ENCODE measurements at regions of chr3 and their contacts with region 1.

Region 1: DNA sequence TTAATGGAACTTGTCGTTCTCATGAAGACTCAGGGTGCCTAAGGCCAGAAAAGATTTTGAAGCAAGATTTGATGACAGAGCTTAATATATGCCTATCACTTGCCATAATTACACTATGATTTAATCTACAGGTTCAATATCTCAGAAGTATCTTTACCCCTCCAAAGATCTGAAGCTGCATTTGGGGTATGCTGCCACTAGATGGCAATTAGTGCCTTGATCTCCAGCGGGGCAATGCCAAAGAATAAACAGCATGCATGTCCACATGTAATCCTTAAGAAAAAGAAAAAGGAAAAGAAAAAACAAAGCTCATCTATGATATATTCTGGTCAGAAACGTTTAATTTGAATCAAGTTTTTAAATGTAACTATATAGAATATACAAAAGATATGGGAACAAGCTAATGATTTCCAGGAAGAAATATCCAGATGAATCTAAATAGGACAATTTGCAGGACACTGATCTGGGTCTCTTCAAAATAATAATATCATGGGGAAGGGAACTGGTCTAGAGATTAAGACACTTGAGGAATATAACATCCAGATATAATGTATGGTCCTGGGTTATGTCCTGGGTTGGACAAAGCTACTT is 55.0 kb upstream of the SOX14 start:
- DNase-seq: peak; percentile 3
- ATAC-seq: no peak
- H3K4me3 ChIP-seq: no peak overlapping the region
- H3K27ac ChIP-seq: no peak overlapping the region
- H3K4me1 ChIP-seq: no peaks in the 10 kb centered on the region
- H3K27me3 ChIP-seq: no peaks in the 10 kb centered on the region
- CTCF ChIP-seq: peak; percentile 37; the same call in 1 of the 2 replicates
- EP300 ChIP-seq: no peak
- POLR2A ChIP-seq: no peak
- RAD21 ChIP-seq: no peak

Region 2: DNA sequence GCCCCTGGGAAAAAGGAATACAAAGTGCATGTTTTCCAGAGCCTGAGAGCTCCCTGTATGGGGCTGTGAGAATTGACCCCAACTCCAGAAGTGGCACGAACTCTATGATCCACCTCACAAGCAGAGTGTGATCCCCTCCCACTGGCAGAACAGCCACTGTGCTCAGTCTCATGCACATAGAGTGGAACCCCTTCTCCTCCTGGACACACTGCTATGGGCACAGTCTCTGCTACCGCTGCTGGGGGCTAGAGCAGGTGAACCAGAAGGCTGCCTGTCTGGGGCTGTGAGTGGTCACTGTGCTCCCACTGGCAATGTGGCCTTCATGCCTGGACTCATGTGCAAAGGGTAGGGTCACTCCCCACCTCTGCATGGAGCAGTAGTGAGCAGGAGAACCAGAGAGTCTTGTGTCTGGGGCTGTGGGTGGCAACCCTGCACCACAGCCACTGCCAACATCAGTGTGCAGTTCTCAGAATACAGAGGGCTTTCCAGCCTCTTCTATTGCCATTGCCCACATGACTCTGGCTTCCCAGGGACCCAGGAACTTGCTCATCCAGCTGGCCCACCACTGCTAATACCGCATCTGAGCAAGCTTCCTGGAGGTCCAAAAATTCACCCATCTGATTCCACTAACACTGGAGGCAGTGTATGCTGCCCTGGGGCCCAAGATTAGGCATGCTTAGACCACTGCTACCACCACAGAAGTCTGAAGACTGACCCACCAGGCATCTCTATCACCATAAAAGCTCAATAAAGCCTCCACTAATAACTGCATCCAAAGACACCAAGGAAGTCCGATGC is 288.7 kb before region 1 on chr3:
- CTCF ChIA-PET with region 1: no interaction called
- POLR2A ChIA-PET with region 1: no interaction called
- in situ Hi-C with region 1: no loop called
- intact Hi-C with region 1: no loop called
- DNase-seq: no peak
- ATAC-seq: no peak
- H3K4me3 ChIP-seq: no peak overlapping the region
- H3K27ac ChIP-seq: no peak overlapping the region
- H3K4me1 ChIP-seq: no peaks in the 10 kb centered on the region
- H3K27me3 ChIP-seq: no peaks in the 10 kb centered on the region
- CTCF ChIP-seq: no peak
- EP300 ChIP-seq: no peak
- POLR2A ChIP-seq: no peak
- RAD21 ChIP-seq: no peak

Region 3: GRCh38 chr3:137572931-137573330 is 136.2 kb before region 1 on chr3:
- CTCF ChIA-PET with region 1: no interaction called
- POLR2A ChIA-PET with region 1: no interaction called
- in situ Hi-C with region 1: no loop called
- intact Hi-C with region 1: no loop called
- DNase-seq: no peak
- ATAC-seq: no peak
- H3K4me3 ChIP-seq: no peak overlapping the region
- H3K27ac ChIP-seq: no peak overlapping the region
- H3K4me1 ChIP-seq: no peaks in the 10 kb centered on the region
- H3K27me3 ChIP-seq: no peaks in the 10 kb centered on the region
- CTCF ChIP-seq: no peak
- EP300 ChIP-seq: no peak
- POLR2A ChIP-seq: no peak
- RAD21 ChIP-seq: no peak

Region 4: GRCh38 chr3:137738710-137739109 is 29.6 kb after region 1 on chr3:
- CTCF ChIA-PET with region 1: no interaction called
- POLR2A ChIA-PET with region 1: no interaction called
- in situ Hi-C with region 1: no loop called
- intact Hi-C with region 1: no loop called
- DNase-seq: no peak
- ATAC-seq: no peak
- H3K4me3 ChIP-seq: no peak overlapping the region
- H3K27ac ChIP-seq: no peak overlapping the region
- H3K4me1 ChIP-seq: no peaks in the 10 kb centered on the region
- H3K27me3 ChIP-seq: no peaks in the 10 kb centered on the region
- CTCF ChIP-seq: no peak
- EP300 ChIP-seq: no peak
- POLR2A ChIP-seq: no peak
- RAD21 ChIP-seq: no peak

Region 5: DNA sequence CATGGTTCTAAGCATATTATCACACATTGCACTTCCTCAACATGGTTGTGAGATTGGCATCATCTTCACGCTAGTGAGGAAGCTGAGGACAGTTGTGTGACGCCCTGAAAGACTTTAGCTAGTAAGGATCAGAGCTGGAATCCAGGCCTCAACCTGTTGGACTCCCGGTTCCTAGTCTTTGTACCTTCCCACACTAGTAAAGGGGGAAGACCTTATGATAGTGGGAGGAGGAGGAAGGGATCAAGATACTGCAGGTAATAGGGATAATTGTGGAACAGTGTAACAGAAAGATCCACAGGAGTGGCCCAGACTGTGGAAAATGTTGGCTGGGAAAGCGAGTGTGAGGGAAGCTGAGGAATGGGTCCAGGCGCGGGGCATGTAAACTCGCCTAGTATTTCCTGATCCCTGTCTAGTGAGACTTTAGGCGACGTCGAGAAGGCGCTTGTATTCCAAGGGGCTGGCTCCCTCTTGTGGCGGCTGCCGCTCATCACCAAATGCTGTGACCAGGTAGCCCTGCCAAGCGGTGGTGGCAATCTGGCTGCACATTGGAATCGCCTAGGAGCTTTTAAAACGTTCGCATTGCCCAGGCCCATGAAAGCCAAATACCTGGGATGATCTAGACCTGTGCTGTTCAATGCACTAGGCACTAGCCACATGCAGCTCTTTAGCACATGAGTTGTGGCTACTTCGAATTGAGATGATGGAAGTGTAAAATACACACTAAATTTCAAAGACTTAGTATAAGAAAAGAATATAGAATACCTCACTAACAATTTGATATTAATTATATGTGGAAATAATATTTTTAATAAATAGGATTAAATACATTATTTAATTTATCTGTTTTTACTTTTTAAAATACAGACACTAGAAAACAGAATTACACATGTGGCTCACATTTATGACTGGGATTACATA is 262.1 kb after region 1 on chr3:
- CTCF ChIA-PET with region 1: interaction called, 4 read pairs
- POLR2A ChIA-PET with region 1: no interaction called
- in situ Hi-C with region 1: no loop called
- intact Hi-C with region 1: loop called (anchors 1 kb)
- DNase-seq: peak; percentile 43
- ATAC-seq: peak; percentile 100
- H3K4me3 ChIP-seq: no peak overlapping the region
- H3K27ac ChIP-seq: no peak overlapping the region
- H3K4me1 ChIP-seq: no peaks in the 10 kb centered on the region
- H3K27me3 ChIP-seq: 0 out of 5 replicates have a peak, but pooled peaks cover 0 to 4% of the 10 kb centered on the region in 2 experiments
- CTCF ChIP-seq: peak; percentile 92
- EP300 ChIP-seq: no peak
- POLR2A ChIP-seq: no peak
- RAD21 ChIP-seq: peak; percentile 68